ENCODE measurements at regions of chr2 and their contacts with region 1.

Region 1: GRCh38 chr2:25252281-25253105 is 84.1 kb upstream of the POMC start:
- DNase-seq: peak; percentile 92
- ATAC-seq: peak; percentile 93
- H3K4me3 Mint-ChIP-seq: peak overlapping the region; percentile 82
- H3K27ac Mint-ChIP-seq: peak overlapping the region; percentile 55
- H3K4me1 Mint-ChIP-seq: peaks cover 58% of the 10 kb centered on the region
- H3K27me3 Mint-ChIP-seq: no peaks in the 10 kb centered on the region; the same call in 1 of the 2 replicates
- CTCF ChIP-seq: no peak

Region 2: DNA sequence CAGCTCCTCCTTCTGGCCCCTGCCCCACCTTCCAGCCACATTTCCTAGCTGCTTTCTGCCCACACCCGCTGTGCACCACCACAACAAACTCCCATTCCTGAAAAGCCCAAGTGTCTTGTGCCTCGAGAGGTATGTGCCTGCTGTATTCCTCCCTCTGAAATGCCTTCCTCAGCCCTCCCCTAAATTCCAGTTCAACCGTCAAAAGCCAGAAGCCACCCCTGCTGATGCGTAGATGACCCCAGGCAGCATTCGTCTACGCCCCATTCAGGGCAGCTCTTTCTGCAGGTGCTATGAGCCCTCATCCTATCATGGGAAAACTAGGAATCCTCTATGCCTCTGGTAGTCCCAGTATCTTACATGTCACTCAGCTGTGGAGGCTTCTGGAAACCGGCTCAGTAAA is 17.6 kb after region 1 on chr2:
- CTCF ChIA-PET with region 1: interaction called, 13 read pairs
- POLR2A ChIA-PET with region 1: interaction called, 10 read pairs
- DNase-seq: peak; percentile 50
- ATAC-seq: peak; percentile 89
- H3K4me3 Mint-ChIP-seq: no peak overlapping the region
- H3K27ac Mint-ChIP-seq: peak overlapping the region; percentile 86
- H3K4me1 Mint-ChIP-seq: peaks cover 42% of the 10 kb centered on the region
- H3K27me3 Mint-ChIP-seq: no peaks in the 10 kb centered on the region; the same call in 1 of the 2 replicates
- CTCF ChIP-seq: no peak

Region 3: GRCh38 chr2:25276569-25277465 is 24.3 kb after region 1 on chr2:
- CTCF ChIA-PET with region 1: interaction called, 31 read pairs
- POLR2A ChIA-PET with region 1: interaction called, 14 read pairs
- DNase-seq: peak; percentile 81
- ATAC-seq: peak; percentile 47
- H3K4me3 Mint-ChIP-seq: peak overlapping the region; percentile 47
- H3K27ac Mint-ChIP-seq: no peak overlapping the region
- H3K4me1 Mint-ChIP-seq: peaks cover 64% of the 10 kb centered on the region
- H3K27me3 Mint-ChIP-seq: no peaks in the 10 kb centered on the region; the same call in 1 of the 2 replicates
- CTCF ChIP-seq: peak; percentile 73

Measured in WTC11 (cell line).